ENCODE measurements at regions of chr4 and their contacts with region 1.

Region 1: GRCh38 chr4:103046416-103047290 is 27.1 kb upstream of the SLC9B1 start:
- DNase-seq: no peak
- H3K4me3 ChIP-seq: no peak overlapping the region
- H3K27ac ChIP-seq: no peak overlapping the region
- H3K4me1 ChIP-seq: no peaks in the 10 kb centered on the region
- H3K27me3 ChIP-seq: no peaks in the 10 kb centered on the region
- CTCF ChIP-seq: peak in 2 of 3 experiments; percentile 71 to 77; a peak in 3 of 4 replicates
- EP300 ChIP-seq: no peak
- POLR2A ChIP-seq: no peak
- RAD21 ChIP-seq: peak; percentile 58 to 62

Region 2: GRCh38 chr4:103032574-103032973 is 14.1 kb before region 1 on chr4:
- CTCF ChIA-PET with region 1: interaction called, 16 read pairs
- POLR2A ChIA-PET with region 1: interaction called, 3 read pairs
- DNase-seq: peak in 1 of 2 experiments; percentile 63
- H3K4me3 ChIP-seq: no peak overlapping the region
- H3K27ac ChIP-seq: no peak overlapping the region
- H3K4me1 ChIP-seq: no peaks in the 10 kb centered on the region
- H3K27me3 ChIP-seq: no peaks in the 10 kb centered on the region
- CTCF ChIP-seq: peak; percentile 57 to 98 (median 83)
- EP300 ChIP-seq: no peak
- POLR2A ChIP-seq: no peak
- RAD21 ChIP-seq: peak; percentile 94 to 95

Region 3: GRCh38 chr4:103099691-103100392 is 53.2 kb after region 1 on chr4 and contains the start of gene BDH2:
- CTCF ChIA-PET with region 1: interaction called, 10 read pairs
- POLR2A ChIA-PET with region 1: interaction called, 3 read pairs
- DNase-seq: peak in 1 of 2 experiments; percentile 27
- H3K4me3 ChIP-seq: peak within 1 kb of the TSS; percentile 32 to 76 (median 44)
- H3K27ac ChIP-seq: no peak within 1 kb of the TSS
- H3K4me1 ChIP-seq: no peaks in the 10 kb centered on the region
- H3K27me3 ChIP-seq: no peaks in the 10 kb centered on the region
- CTCF ChIP-seq: peak in 2 of 3 experiments; percentile 63 to 72; a peak in 3 of 4 replicates
- EP300 ChIP-seq: no peak
- POLR2A ChIP-seq: peak; percentile 60 to 67; a peak in 2 of 3 replicates
- RAD21 ChIP-seq: peak; percentile 75 to 78
- total RNA-seq, gene BDH2: 44.6 and 46.0 TPM in 2 replicates

Region 4: GRCh38 chr4:103171006-103171405 is 124.4 kb after region 1 on chr4:
- CTCF ChIA-PET with region 1: no interaction called
- POLR2A ChIA-PET with region 1: no interaction called
- DNase-seq: no peak
- H3K4me3 ChIP-seq: no peak overlapping the region
- H3K27ac ChIP-seq: no peak overlapping the region
- H3K4me1 ChIP-seq: no peaks in the 10 kb centered on the region
- H3K27me3 ChIP-seq: no peaks in the 10 kb centered on the region
- CTCF ChIP-seq: no peak
- EP300 ChIP-seq: no peak
- POLR2A ChIP-seq: no peak
- RAD21 ChIP-seq: no peak